HEK293 (cell line): ENCODE measurements at regions of chrX and their contacts with region 1.

Region 1: GRCh38 chrX:44914532-44915198 is 41.7 kb downstream of the KDM6A start:
- H3K4me3 ChIP-seq: no peak overlapping the region
- H3K27ac ChIP-seq: no peak overlapping the region
- H3K4me1 ChIP-seq: peaks cover 21% of the 10 kb centered on the region
- CTCF ChIP-seq: no peak

Region 2: GRCh38 chrX:44770121-44770520 is 144.5 kb before region 1 on chrX:
- CTCF ChIA-PET with region 1: no interaction called
- POLR2A ChIA-PET with region 1: no interaction called
- H3K4me3 ChIP-seq: no peak overlapping the region
- H3K27ac ChIP-seq: no peak overlapping the region
- H3K4me1 ChIP-seq: no peaks in the 10 kb centered on the region
- CTCF ChIP-seq: no peak

Region 3: GRCh38 chrX:44903107-44903506 is 11.6 kb before region 1 on chrX:
- CTCF ChIA-PET with region 1: interaction called, 10 read pairs
- POLR2A ChIA-PET with region 1: no interaction called
- H3K4me3 ChIP-seq: no peak overlapping the region
- H3K27ac ChIP-seq: no peak overlapping the region
- H3K4me1 ChIP-seq: peaks cover 26% of the 10 kb centered on the region
- CTCF ChIP-seq: no peak